ENCODE measurements at regions of chr13 and their contacts with region 1.

Region 1: GRCh38 chr13:40589285-40590109 is 76.9 kb downstream of the FOXO1 start:
- DNase-seq: peak in 1 of 3 donors; percentile 48
- ATAC-seq: peak; percentile 81 to 90
- H3K4me3 ChIP-seq: no peak overlapping the region
- H3K27ac ChIP-seq: peak overlapping the region; percentile 5
- H3K4me1 ChIP-seq: peaks cover 20% of the 10 kb centered on the region
- H3K27me3 ChIP-seq: no peaks in the 10 kb centered on the region

Region 2: GRCh38 chr13:40408602-40409001 is 180.9 kb before region 1 on chr13:
- intact Hi-C with region 1: no loop called
- DNase-seq: no peak
- ATAC-seq: no peak
- H3K4me3 ChIP-seq: no peak overlapping the region
- H3K27ac ChIP-seq: no peak overlapping the region
- H3K4me1 ChIP-seq: peaks cover 8% of the 10 kb centered on the region
- H3K27me3 ChIP-seq: no peaks in the 10 kb centered on the region

Region 3: GRCh38 chr13:40570930-40571329 is 18.6 kb before region 1 on chr13:
- intact Hi-C with region 1: loop called in 1 of 4 experiments (anchors 2 kb)
- DNase-seq: no peak
- ATAC-seq: no peak
- H3K4me3 ChIP-seq: no peak overlapping the region
- H3K27ac ChIP-seq: no peak overlapping the region
- H3K4me1 ChIP-seq: peaks cover 17% of the 10 kb centered on the region
- H3K27me3 ChIP-seq: no peaks in the 10 kb centered on the region

Region 4: DNA sequence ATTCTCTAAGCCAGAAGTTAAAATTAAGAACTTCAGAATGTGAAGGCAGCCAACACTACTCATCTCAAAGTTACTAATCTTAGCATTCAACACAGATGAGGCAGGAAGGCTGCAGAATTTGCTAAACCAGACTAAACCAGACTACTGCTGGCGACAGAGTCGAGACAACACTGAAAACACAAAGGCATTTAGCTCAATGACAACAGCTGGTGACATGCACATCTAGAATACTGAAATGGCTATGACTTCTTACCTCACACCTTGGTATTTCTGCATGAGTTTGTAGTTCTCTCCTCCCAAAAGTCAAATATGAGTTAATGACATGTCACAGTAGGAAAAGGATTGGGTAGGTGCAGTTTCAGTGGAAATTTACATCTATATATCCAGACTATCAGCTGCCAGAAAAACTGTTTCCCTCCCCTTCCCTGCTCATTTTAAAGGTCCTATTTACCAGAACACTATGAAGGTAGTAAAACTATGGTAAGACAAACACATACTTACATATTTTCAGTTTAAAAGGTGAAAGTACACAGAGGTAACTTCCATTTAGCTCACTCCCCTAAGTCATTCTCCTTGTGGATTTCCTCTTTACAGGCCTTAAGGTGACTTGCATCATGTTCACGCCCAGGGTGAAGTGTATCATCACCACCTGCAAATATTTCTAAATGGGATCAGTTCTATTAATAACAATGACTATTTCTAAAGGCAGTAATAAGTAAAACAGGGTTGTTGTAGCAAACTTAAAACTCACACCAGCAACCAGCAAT is 55.5 kb after region 1 on chr13:
- intact Hi-C with region 1: loop called in 1 of 4 experiments (anchors 10 kb)
- DNase-seq: no peak
- ATAC-seq: no peak
- H3K4me3 ChIP-seq: no peak overlapping the region
- H3K27ac ChIP-seq: no peak overlapping the region
- H3K4me1 ChIP-seq: peaks cover 24% of the 10 kb centered on the region
- H3K27me3 ChIP-seq: no peaks in the 10 kb centered on the region